Activated CD4-positive, alpha-beta memory T cell treated with anti-CD3 and anti-CD28 coated beads for 36 hours (primary cell): ENCODE measurements at regions of chr1 and their contacts with region 1.

Region 1: GRCh38 chr1:205255941-205256780 is 28.4 kb downstream of the TMCC2 start:
- DNase-seq: peak; percentile 92
- H3K4me3 Mint-ChIP-seq: no peak overlapping the region
- H3K27ac Mint-ChIP-seq: no peak overlapping the region
- H3K4me1 Mint-ChIP-seq: no peaks in the 10 kb centered on the region
- H3K27me3 Mint-ChIP-seq: peaks cover 4% of the 10 kb centered on the region

Region 2: DNA sequence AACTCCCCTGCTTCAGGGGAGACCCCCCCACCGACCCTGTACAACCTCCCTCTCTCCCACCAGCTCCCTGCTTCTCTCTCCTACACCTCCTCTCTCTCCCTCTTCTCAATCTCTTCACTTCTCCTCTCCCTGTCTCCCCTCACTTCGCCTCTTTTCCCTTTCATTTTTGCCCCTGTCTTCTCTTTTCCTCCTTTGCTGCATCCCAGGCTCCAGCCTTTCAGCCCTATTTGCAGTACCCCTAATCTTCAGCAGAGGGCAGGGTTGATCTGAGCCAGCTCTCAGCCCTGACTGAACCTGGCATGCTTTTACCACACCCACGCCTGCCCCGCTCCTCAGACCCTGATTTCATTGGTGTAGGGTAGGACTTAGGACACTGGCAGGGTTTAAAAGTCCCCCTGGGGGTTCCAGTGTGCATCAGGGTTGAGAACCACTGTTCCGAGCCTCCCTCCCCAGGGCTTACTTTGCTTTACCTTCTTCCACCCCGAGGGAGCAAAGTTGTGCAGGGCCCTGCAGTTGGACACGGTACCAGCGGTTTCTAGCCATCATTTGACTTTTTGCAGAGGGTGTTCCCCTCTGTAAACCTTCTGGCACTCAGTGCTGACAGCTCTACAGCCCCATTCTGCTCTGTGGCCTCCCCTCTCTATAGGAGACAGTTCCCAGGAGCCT is 280.5 kb before region 1 on chr1:
- CTCF ChIA-PET with region 1: interaction called, 27 read pairs
- POLR2A ChIA-PET with region 1: no interaction called
- intact Hi-C with region 1: no loop called
- DNase-seq: peak; percentile 61
- H3K4me3 Mint-ChIP-seq: no peak overlapping the region
- H3K27ac Mint-ChIP-seq: no peak overlapping the region
- H3K4me1 Mint-ChIP-seq: no peaks in the 10 kb centered on the region
- H3K27me3 Mint-ChIP-seq: peaks cover 5% of the 10 kb centered on the region

Region 3: DNA sequence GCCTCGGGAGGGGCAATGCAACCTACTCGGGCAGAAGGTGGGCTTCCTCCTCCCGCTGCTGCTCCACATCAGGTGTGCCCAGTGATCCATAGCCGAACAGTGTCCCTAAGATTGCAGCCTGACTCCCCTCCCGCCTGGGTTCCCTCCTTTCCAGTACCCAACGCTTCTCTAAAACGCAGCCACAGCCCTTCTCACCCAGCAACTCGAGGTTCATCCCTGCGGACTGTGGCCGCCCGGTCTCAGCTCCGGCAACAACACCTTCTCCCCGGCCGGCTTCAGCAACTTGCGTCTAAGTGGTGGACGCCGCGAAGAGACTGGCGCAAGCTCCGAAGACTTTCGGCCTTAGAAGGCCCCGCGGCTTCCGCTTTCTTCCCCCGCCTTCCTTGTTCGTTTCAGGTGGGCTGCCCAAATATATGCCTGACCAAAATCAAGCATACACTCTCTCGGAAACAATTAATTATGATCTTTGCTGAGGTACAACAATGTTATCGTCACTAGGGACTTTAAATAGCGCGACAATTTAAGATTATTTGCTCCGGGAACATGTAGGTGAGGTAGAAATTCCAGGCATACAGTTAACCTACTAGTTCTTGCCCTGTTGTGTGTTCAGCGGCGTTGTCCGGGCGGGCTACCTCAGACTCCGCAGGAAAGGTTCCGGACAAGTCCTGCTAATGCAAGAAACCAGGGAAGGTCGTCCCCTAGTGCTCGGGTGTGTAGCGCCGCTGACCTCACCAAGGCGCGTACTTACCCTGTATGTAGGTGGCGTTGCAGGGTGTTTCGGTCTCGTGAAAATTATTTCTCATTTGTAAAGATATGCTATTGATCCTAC is 134.3 kb before region 1 on chr1 and contains the start of gene RBBP5:
- CTCF ChIA-PET with region 1: interaction called, 43 read pairs
- POLR2A ChIA-PET with region 1: no interaction called
- intact Hi-C with region 1: no loop called
- DNase-seq: peak; percentile 97
- H3K4me3 Mint-ChIP-seq: peak within 1 kb of the TSS; percentile 98
- H3K27ac Mint-ChIP-seq: peak within 1 kb of the TSS; percentile 98
- H3K4me1 Mint-ChIP-seq: peaks cover 34% of the 10 kb centered on the region
- H3K27me3 Mint-ChIP-seq: no peaks in the 10 kb centered on the region
- total RNA-seq, gene RBBP5: 23.5 to 25.9 TPM

Region 4: GRCh38 chr1:205172729-205173366 is 83.3 kb before region 1 on chr1:
- CTCF ChIA-PET with region 1: interaction called, 12 read pairs
- POLR2A ChIA-PET with region 1: no interaction called
- intact Hi-C with region 1: no loop called
- DNase-seq: peak; percentile 31
- H3K4me3 Mint-ChIP-seq: no peak overlapping the region
- H3K27ac Mint-ChIP-seq: peak overlapping the region; percentile 64
- H3K4me1 Mint-ChIP-seq: peaks cover 24% of the 10 kb centered on the region
- H3K27me3 Mint-ChIP-seq: no peaks in the 10 kb centered on the region

Region 5: GRCh38 chr1:205227584-205228006 is 28.6 kb before region 1 on chr1 and contains the start of gene TMCC2:
- CTCF ChIA-PET with region 1: interaction called, 338 read pairs
- POLR2A ChIA-PET with region 1: interaction called, 10 read pairs
- intact Hi-C with region 1: loop called (anchors 1 kb)
- DNase-seq: peak; percentile 88
- H3K4me3 Mint-ChIP-seq: peak within 1 kb of the TSS; percentile 84
- H3K27ac Mint-ChIP-seq: no peak within 1 kb of the TSS
- H3K4me1 Mint-ChIP-seq: peaks cover 34% of the 10 kb centered on the region
- H3K27me3 Mint-ChIP-seq: peaks cover 10% of the 10 kb centered on the region
- total RNA-seq, gene TMCC2: 9.8 to 10.1 TPM

Region 6: DNA sequence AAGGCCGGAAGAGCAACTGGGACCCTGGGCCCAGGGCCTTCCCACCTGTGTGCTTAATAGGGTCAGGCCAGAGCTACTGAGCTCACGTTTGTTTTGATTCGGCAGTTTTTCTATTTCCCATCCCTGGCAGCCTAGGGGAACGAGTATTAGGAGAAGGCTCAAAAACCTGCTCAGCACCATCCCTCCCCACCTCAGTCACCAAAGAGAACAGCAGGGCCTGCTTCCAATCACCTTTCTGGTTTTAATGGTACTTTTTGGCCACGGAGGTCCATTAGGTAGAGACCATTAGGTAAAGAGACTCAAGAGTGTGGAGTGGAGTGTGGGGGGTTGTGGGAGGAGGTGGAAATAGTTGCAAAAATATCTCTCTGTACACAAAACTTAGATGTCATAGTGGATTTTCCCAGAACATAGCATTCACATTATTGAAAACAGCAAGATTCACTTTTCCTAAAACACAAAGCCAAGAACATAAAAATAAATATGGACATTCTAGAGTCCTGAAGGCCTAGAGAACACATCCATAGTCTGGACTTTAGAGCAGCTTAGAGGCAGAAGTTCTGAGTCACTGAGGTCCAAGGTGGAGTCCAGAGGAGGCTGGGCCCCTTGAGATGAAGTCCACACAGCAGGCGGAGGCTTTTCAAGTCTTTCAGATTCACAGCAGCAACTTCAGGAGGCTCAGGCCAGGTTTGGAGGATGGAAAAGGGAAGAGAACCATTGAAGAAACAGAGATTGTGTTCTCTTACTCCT is 45.9 kb after region 1 on chr1:
- CTCF ChIA-PET with region 1: no interaction called
- POLR2A ChIA-PET with region 1: no interaction called
- intact Hi-C with region 1: no loop called
- DNase-seq: no peak
- H3K4me3 Mint-ChIP-seq: no peak overlapping the region
- H3K27ac Mint-ChIP-seq: no peak overlapping the region
- H3K4me1 Mint-ChIP-seq: peaks cover 28% of the 10 kb centered on the region
- H3K27me3 Mint-ChIP-seq: no peaks in the 10 kb centered on the region

Region 7: GRCh38 chr1:205321164-205321958 is 65.2 kb after region 1 on chr1 and contains the start of gene NUAK2:
- CTCF ChIA-PET with region 1: interaction called, 23 read pairs
- POLR2A ChIA-PET with region 1: no interaction called
- intact Hi-C with region 1: no loop called
- DNase-seq: peak; percentile 89
- H3K4me3 Mint-ChIP-seq: peak within 1 kb of the TSS; percentile 88
- H3K27ac Mint-ChIP-seq: peak within 1 kb of the TSS; percentile 72
- H3K4me1 Mint-ChIP-seq: peaks cover 60% of the 10 kb centered on the region
- H3K27me3 Mint-ChIP-seq: peaks cover 2% of the 10 kb centered on the region
- total RNA-seq, gene NUAK2: 4.4 to 4.5 TPM

Region 8: DNA sequence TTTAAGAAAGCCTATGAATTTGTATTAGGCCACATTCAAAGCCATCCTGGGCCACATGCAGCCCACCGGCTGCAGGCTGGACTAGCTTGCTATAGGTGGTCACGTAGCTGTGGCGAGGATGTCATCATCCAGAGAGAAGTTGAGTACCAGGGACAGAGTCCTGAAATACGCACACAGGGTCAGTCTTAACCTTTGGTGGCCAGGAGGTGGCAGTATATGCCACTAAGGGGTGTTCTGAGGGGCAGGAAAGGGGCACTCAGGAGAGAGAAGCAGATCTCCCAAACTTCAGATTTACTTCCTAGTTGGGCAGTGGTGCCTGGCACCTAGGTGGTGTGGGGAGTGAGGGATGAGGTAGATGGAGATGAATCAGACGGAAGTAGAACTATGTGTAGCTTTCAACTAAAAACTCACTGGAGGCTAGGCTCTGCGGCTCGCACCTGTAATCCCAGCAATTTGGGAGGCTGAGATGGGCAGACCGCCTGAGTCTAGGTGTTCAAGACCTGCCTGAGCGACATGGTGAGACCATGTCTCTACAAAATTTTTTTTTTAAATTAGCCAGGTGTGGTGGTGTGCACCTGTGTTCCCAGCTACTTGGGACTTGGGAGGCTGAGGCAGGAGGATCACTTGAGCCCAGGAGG is 232.0 kb after region 1 on chr1:
- CTCF ChIA-PET with region 1: no interaction called
- POLR2A ChIA-PET with region 1: no interaction called
- intact Hi-C with region 1: no loop called
- DNase-seq: peak; percentile 56
- H3K4me3 Mint-ChIP-seq: no peak overlapping the region
- H3K27ac Mint-ChIP-seq: no peak overlapping the region
- H3K4me1 Mint-ChIP-seq: peaks cover 1% of the 10 kb centered on the region
- H3K27me3 Mint-ChIP-seq: peaks cover 20% of the 10 kb centered on the region